CD8-positive, alpha-beta memory T cell (primary cell): ENCODE measurements at regions of chr10 and their contacts with region 1.

Region 1: GRCh38 chr10:80459047-80459931 is 5.2 kb downstream of the TSPAN14 start:
- DNase-seq: peak; percentile 51 to 82 (median 61)
- H3K4me3 ChIP-seq: peak overlapping the region; percentile 76
- H3K4me3 Mint-ChIP-seq: peak overlapping the region; percentile 88 to 99 (median 99)
- H3K27ac ChIP-seq: peak overlapping the region; percentile 55
- H3K27ac Mint-ChIP-seq: peak overlapping the region; percentile 84 to 99 (median 95)
- H3K4me1 ChIP-seq: peaks cover 86% of the 10 kb centered on the region
- H3K4me1 Mint-ChIP-seq: peaks cover 85 to 92% (median 85%) of the 10 kb centered on the region in 3 donors
- H3K27me3 ChIP-seq: no peaks in the 10 kb centered on the region
- H3K27me3 Mint-ChIP-seq: no peaks in the 10 kb centered on the region

Region 2: GRCh38 chr10:80265740-80266512 is 193.4 kb before region 1 on chr10:
- CTCF ChIA-PET with region 1: no interaction called
- POLR2A ChIA-PET with region 1: no interaction called
- DNase-seq: no peak
- H3K4me3 ChIP-seq: no peak overlapping the region
- H3K4me3 Mint-ChIP-seq: no peak overlapping the region
- H3K27ac ChIP-seq: no peak overlapping the region
- H3K27ac Mint-ChIP-seq: no peak overlapping the region
- H3K4me1 ChIP-seq: no peaks in the 10 kb centered on the region
- H3K4me1 Mint-ChIP-seq: no peaks in the 10 kb centered on the region
- H3K27me3 ChIP-seq: no peaks in the 10 kb centered on the region
- H3K27me3 Mint-ChIP-seq: peaks cover 16 to 17% of the 10 kb centered on the region in 2 donors

Region 3: DNA sequence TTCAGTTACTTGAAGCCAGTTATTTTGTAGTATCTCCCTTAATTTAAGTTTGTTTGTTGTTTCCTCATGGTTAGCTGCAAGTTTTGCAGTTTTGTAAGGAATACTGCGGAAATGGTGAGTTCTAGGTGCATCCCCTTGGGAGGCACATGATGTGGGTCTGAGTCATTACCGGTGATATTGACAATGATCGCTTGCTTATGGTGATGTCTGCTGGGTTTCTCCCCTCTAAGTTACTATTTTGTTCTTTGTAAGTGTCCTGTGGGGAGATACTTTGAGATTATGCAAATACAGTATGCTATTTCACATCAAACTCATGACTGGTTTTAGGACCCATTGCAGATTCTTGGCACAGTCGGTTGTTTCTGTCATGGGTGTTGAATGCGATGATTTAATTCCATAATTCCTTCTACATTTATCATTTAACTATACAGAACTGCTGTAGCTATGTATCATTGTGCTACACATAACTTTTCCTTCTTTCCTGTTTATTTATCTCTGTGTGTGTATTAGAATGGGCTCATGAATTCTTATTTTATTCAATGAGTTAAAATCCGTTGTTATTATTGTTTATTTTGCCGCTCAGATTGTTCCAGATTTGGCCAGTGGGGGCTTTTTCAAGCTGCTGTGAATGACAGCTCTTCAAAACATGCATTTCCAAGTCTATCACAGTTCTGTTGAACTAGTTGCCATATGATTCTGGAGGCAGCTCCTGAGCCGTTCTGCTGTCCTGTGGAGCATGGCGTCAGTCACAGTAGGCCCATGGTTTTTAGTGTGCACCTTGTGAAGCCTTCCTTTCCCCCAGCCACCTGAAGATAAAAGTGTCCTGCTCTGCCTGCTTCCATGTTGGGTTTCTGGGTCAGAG is 13.2 kb after region 1 on chr10:
- CTCF ChIA-PET with region 1: interaction called, 94 read pairs
- POLR2A ChIA-PET with region 1: interaction called, 27 read pairs
- DNase-seq: no peak
- H3K4me3 ChIP-seq: peak overlapping the region; percentile 36
- H3K4me3 Mint-ChIP-seq: peak overlapping the region; percentile 34 to 99 (median 78)
- H3K27ac ChIP-seq: peak overlapping the region; percentile 28
- H3K27ac Mint-ChIP-seq: peak overlapping the region; percentile 73 to 98 (median 95)
- H3K4me1 ChIP-seq: peaks cover 88% of the 10 kb centered on the region
- H3K4me1 Mint-ChIP-seq: peaks cover 88 to 97% (median 95%) of the 10 kb centered on the region in 3 donors
- H3K27me3 ChIP-seq: no peaks in the 10 kb centered on the region
- H3K27me3 Mint-ChIP-seq: no peaks in the 10 kb centered on the region

Region 4: DNA sequence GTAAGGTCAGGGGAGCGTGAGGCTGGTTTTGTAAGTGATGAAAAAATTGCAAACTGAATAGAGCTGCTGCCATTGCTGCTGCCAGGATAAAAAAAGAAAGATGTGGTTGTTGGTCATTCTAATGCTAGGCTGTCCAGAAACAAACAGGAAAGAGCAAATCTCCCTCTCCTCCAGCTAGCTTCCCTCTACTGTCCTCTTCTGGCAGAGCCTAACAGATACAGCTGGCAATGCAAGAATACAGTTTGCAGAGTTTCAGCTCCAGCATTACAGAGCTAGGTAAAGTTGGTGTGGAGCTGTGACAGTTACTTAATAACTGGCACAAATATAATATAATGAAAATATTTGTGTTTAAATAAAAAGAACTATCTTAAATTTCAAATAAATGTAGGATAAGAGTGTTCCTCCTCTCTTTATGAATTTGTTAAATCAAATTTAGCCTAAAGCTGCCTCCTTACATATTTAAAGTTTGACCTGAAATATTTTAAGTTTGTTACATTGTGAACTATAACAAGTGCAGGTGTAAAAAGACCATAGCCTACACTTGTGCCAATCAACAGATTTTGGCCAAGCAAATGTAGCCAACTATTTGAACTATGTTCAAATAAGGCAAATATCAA is 486.1 kb after region 1 on chr10:
- CTCF ChIA-PET with region 1: no interaction called
- POLR2A ChIA-PET with region 1: no interaction called
- DNase-seq: no peak
- H3K4me3 ChIP-seq: no peak overlapping the region
- H3K4me3 Mint-ChIP-seq: no peak overlapping the region
- H3K27ac ChIP-seq: no peak overlapping the region
- H3K27ac Mint-ChIP-seq: no peak overlapping the region
- H3K4me1 ChIP-seq: no peaks in the 10 kb centered on the region
- H3K4me1 Mint-ChIP-seq: no peaks in the 10 kb centered on the region
- H3K27me3 ChIP-seq: no peaks in the 10 kb centered on the region
- H3K27me3 Mint-ChIP-seq: peaks cover 0 to 3% of the 10 kb centered on the region in 2 donors